AG04450 (cell line): ENCODE measurements at regions of chr1 and their contacts with region 1.

Region 1: DNA sequence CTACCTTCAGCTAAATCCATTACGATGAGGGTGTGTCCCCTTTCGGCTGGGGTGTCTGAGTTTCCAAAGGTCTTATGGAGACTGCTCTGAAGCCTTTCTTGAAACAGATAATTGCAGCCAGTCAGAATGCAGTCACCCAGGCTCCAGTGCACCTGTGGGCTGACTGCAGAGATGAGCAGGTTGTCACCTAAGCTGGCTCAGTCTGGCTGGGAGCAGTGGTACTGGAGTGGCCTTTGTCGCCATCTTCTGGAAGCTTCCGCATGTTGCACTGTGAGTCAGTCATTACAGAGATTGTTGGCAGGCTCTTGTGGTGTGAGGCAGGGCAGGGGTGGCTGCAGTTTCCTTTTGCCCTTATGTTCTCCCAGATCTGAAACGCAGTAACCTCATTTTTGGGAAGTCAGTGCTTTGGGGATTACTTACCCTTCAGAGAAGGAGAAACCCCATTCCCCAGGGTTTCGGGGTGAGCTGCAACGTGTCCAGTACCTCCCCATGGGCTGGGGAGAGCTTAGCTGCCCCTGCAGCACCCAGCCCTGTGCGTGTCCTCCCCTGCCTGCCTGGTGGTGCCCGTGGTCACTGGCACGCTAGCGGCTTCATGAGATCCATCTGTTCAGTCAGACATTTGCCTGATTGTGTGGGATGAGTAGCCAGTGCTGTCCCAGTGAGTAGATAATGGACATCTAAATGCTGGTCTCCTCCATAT is 48.0 kb downstream of the SMYD2 start:
- DNase-seq: peak; percentile 44
- H3K4me3 ChIP-seq: no peak overlapping the region
- H3K27ac ChIP-seq: no peak overlapping the region
- H3K27me3 ChIP-seq: no peaks in the 10 kb centered on the region
- CTCF ChIP-seq: peak; percentile 92

Region 2: DNA sequence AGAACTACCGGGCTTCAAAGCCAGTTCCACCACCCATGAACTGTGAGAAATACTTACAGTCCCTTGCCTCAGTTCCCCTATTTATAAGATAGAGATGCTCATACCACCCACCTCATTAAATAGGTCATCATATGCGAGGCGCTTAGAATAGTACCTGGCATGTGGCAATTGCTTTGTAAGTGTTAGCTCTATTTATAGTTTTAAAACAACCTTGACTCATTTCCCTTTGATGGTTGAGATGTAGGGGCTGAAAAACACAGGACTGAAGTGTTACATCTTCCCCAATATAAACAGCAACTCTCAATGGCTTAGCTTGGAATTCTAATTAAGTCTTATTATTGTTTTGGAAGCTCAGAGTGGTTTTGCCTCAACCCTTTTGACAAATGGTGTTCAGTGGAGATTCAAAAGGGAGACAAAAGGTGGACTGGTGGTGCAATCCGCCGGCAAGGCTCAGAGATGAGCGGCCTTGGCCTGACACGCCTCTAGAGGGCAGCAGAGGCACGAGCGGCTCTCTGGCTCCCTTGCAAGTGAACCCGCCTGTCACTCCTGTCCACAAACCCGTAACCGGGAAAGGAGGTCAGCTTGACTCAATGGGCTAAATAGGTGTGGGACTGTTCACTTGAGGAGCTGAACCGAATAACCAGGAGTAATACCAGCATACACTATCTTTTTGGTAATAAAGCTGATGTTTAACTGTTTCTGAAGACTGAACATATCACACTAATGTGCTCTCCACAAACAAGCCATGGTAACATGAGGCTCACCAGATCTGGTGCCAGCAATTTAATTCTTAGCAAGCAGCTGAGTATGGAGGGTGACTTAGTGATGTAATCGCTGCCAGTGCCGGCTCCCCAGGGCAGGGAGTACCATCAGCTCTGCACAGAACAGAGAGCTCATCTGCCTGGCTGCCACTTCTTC is 67.5 kb before region 1 on chr1:
- CTCF ChIA-PET with region 1: interaction called, 435 read pairs
- POLR2A ChIA-PET with region 1: no interaction called
- DNase-seq: peak; percentile 27
- H3K4me3 ChIP-seq: no peak overlapping the region; the same call in 1 of the 2 replicates
- H3K27ac ChIP-seq: no peak overlapping the region
- H3K27me3 ChIP-seq: peaks cover 5% of the 10 kb centered on the region
- CTCF ChIP-seq: peak; percentile 99

Region 3: GRCh38 chr1:214310010-214310409 is 18.9 kb before region 1 on chr1:
- CTCF ChIA-PET with region 1: interaction called, 70 read pairs
- POLR2A ChIA-PET with region 1: no interaction called
- DNase-seq: no peak
- H3K4me3 ChIP-seq: no peak overlapping the region
- H3K27ac ChIP-seq: no peak overlapping the region
- H3K27me3 ChIP-seq: no peaks in the 10 kb centered on the region
- CTCF ChIP-seq: no peak

Region 4: GRCh38 chr1:214416417-214416816 is 87.5 kb after region 1 on chr1:
- CTCF ChIA-PET with region 1: interaction called, 10 read pairs
- POLR2A ChIA-PET with region 1: no interaction called
- DNase-seq: no peak
- H3K4me3 ChIP-seq: no peak overlapping the region
- H3K27ac ChIP-seq: no peak overlapping the region
- H3K27me3 ChIP-seq: no peaks in the 10 kb centered on the region
- CTCF ChIP-seq: no peak

Region 5: DNA sequence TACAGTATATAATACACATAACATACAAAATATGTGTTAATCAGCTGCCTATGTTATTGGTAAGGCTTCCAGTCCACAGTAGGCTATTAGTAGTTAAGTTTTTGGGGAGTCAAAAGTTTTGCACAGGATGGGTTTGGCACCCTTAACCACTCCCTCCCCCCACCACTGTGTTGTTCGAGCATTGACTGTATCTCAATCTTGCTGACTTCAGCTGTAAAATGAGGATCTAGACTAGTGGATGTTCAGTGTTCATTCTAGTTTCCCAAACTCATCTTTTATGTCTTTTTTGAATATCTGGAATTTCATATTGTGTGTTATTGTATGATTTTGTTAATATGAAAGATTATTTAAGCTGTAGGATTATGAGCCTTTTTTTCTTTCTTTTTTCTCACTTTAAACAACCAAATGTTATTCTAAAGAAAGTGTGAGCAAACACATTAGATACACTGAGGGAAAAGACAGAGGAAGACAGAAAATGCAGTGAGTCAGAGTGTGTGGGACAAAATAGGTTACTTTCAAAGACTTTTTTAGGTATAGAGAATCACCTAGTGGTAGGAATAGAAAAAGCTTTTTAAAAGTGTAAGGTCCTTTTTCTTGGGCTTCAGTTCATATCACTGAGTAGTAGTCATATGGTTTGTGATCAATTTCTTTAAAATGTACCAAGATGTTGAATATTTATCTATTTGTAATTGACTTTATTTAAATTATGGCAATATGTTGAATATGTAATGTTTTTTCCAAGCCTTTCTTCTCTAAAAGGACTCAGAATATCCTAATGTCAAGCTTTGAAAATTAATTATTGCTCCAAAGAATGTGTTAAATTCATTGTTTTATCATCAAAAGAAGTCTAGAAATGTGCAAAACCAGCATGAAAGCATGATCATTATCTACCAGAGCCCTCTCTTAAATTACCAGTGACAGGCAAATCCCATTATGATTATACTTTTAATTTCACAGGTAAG is 256.2 kb after region 1 on chr1:
- CTCF ChIA-PET with region 1: interaction called, 278 read pairs
- POLR2A ChIA-PET with region 1: interaction called, 3 read pairs
- DNase-seq: peak; percentile 26
- H3K4me3 ChIP-seq: no peak overlapping the region
- H3K27ac ChIP-seq: no peak overlapping the region
- H3K27me3 ChIP-seq: no peaks in the 10 kb centered on the region
- CTCF ChIP-seq: peak; percentile 86

Region 6: DNA sequence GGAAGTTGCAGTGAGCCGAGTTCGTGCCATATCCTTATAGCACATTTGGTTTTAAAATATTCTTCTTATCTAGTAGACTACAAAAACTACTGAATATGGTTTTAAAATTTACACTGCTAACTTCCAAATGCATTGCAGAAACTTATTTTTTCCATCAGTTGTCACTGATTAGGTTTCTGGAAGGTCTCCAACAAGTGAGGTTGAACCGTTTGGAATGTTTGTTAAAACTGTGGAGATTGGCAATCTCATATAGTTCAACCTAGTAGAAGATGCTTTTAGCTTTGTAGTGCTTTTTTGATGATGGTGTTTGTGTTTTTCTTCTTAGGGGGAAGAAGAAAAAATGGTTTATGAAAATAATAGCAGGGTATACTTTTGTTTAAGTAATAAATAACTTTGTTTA is 287.0 kb after region 1 on chr1:
- CTCF ChIA-PET with region 1: interaction called, 23 read pairs
- POLR2A ChIA-PET with region 1: no interaction called
- DNase-seq: peak; percentile 30
- H3K4me3 ChIP-seq: no peak overlapping the region
- H3K27ac ChIP-seq: no peak overlapping the region
- H3K27me3 ChIP-seq: no peaks in the 10 kb centered on the region
- CTCF ChIP-seq: no peak

Region 7: DNA sequence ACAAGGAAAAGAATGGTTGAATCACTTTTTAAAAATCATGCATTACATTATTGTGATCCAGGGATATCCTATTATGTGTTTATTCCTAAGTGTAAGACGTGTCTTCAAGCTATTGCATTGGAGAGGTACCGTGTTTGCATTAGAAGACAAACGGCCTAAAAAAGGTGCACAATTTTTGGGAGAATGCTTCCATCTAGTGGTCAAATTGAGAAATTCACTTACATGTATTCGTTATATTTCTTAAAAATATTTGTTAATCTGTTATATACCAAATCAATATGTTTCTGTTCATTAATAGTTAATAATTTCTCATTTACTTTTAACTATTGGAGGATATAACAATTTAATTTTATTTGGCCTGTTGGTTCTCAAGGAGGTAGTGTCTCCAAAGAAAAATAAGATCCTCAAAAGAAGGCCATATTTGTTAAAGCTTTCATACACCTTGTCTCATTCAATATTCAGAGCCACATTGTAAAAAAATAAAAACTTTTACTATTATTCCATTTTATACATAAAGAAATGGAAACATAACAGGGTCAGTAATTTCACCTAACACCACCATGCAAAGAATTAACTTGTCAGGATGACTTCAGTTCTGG is 1197.7 kb after region 1 on chr1:
- CTCF ChIA-PET with region 1: interaction called, 117 read pairs
- POLR2A ChIA-PET with region 1: no interaction called
- DNase-seq: peak; percentile 29
- H3K4me3 ChIP-seq: no peak overlapping the region
- H3K27ac ChIP-seq: no peak overlapping the region
- H3K27me3 ChIP-seq: no peaks in the 10 kb centered on the region
- CTCF ChIP-seq: peak; percentile 58